ENCODE measurements at regions of chr12 and their contacts with region 1.

Region 1: DNA sequence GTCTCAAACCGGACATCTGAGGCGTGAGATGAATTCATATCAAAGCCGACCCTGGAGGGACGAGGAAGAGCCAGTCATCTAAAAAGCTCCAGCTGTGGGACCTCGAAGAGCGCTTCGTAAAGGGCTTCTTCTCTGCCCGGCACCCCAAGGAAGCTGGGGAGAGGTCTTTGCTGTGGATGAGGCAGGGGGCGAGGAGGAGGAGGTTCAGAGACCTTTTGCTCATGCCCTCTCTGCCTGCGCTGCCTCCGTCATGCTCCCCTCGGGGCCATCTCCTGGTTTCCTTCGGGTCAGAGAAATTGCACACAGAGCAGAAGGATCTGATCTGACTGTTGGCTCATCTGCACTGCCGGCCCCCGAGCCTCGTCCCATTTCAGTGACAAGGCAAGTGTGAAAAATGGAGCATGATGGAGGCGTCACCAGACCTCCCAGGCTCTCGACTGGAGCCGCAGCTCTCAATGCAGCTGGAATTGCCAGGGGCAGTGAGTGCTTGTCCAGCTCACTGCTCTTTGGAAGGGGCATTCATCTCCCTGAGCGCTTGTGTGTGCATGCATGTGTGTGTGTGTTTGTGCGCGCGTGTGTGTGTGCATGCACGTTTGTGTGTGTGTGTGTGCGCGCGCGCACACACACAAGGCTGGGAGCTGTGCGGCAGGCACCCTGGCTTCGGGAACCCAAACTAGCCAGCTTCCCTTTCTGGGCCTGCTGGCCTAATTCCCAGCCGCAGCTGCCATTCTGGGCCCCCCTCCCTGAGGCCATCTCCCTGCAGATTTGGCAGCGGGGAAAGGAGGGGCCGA is 9.2 kb downstream of the CABP1 start:
- DNase-seq: peak in 2 of 3 donors; percentile 50 to 62
- H3K4me3 ChIP-seq: peak overlapping the region in 4 of 7 experiments; percentile 26 to 66 (median 62)
- H3K27ac ChIP-seq: no peak overlapping the region
- H3K4me1 ChIP-seq: peaks cover 0 to 17% (median 15%) of the 10 kb centered on the region in 4 experiments
- H3K27me3 ChIP-seq: peaks cover 0 to 34% (median 30%) of the 10 kb centered on the region in 5 experiments

Region 2: DNA sequence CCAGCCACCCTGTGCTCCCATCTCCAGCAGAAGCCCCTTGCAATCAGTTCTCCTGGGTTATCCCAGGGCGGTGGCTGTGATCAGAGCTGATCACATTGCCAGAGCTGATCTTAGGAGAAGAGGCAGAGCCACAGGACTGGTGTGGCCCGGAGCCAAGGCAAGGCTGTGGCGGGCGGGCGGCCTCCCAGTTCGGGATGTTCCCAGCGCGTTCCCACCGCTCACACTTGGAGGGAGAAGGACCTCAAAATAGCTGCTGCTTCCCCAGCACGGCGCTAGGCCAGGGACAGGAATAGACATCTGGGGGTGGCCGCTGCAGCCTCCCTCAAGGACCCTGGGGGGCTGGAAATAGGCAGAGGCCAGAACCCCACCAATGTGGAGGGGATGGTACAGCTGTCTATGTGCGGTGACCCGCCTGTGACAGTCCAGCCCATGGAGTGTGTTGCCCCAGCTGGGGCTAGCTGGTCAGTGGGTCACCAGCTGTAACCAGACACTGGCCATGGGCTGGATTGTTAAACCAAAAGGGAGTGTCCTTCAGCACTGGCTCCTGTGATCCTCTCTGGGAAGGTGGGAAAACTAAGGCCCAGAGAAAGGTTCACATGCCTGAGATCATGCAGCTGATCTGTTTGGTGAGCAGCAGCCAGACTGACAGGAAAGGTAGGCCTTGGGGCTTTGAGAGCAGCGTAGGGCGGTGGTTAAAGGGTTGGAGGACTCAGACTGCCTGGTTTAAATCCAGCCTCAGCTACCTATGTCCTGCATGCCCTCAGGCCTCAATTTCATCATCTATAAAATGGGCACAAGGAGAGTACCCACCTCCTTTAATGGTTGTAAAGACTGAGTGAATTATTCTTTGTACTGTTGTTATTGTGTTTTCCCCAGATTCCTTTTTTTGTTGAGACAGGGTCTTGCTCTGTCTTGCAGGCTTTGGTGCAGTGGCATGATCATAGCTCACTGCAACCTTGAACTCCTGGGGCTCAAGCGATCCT is 60.4 kb before region 1 on chr12:
- CTCF ChIA-PET with region 1: interaction called, 58 read pairs
- POLR2A ChIA-PET with region 1: no interaction called
- DNase-seq: no peak
- H3K4me3 ChIP-seq: no peak overlapping the region
- H3K27ac ChIP-seq: no peak overlapping the region
- H3K4me1 ChIP-seq: peaks cover 0 to 8% (median 6%) of the 10 kb centered on the region in 4 experiments
- H3K27me3 ChIP-seq: peaks cover 0 to 22% (median 8%) of the 10 kb centered on the region in 5 experiments

Region 3: DNA sequence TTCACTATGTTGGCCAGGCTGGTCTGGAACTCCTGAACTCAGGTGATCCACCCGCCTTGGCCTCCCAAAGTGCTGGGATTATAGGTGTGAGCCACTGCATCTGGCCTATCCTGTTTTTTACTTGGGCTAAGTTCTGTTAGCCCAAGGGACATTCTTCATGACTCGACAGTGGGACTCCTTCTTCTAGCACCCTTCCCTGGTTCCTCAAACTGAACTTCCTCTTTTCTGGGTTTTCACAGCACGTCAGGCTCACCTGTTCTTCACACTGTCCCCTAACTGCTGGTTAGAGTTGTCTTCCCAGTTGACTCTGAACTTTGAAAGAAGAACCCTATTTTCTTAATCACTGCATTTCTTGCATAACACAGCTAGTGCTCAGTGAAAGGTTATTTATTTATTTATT is 13.2 kb after region 1 on chr12:
- CTCF ChIA-PET with region 1: interaction called, 47 read pairs
- POLR2A ChIA-PET with region 1: no interaction called
- DNase-seq: peak in 2 of 3 donors; percentile 62 to 72
- H3K4me3 ChIP-seq: no peak overlapping the region
- H3K27ac ChIP-seq: no peak overlapping the region
- H3K4me1 ChIP-seq: peaks cover 0 to 4% (median under 1%) of the 10 kb centered on the region in 4 experiments
- H3K27me3 ChIP-seq: no peaks in the 10 kb centered on the region

Region 4: DNA sequence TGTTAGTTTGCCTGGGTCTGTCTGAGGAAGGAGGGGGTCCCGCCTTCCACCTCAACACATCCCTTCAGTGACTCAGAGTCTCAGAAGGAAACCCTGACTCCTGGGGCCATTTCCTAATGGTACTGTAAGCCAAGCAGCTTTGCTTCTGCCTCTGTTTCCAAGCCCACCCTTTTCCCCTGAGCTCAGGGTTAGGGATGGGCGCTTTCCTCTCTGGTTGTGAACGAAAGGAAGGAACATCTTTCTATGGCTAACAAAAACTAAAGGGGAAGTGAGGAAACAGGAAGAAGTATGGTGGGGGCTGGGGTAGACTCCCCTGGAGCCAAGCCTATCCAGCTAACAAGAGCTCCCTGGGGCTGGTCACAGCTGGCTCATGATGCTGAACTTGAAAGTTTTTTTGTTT is 49.0 kb after region 1 on chr12:
- CTCF ChIA-PET with region 1: interaction called, 20 read pairs
- POLR2A ChIA-PET with region 1: no interaction called
- DNase-seq: peak in 2 of 3 donors; percentile 46 to 57
- H3K4me3 ChIP-seq: no peak overlapping the region
- H3K27ac ChIP-seq: peak overlapping the region in 1 of 2 experiments; percentile 46
- H3K4me1 ChIP-seq: peaks cover 0 to 13% (median 9%) of the 10 kb centered on the region in 4 experiments
- H3K27me3 ChIP-seq: no peaks in the 10 kb centered on the region

Region 5: GRCh38 chr12:120971299-120972179 is 321.9 kb after region 1 on chr12:
- CTCF ChIA-PET with region 1: interaction called, 43 read pairs
- POLR2A ChIA-PET with region 1: no interaction called
- DNase-seq: peak; percentile 81 to 91 (median 90)
- H3K4me3 ChIP-seq: peak overlapping the region in 2 of 7 experiments; percentile 25 to 31
- H3K27ac ChIP-seq: no peak overlapping the region
- H3K4me1 ChIP-seq: peaks cover 0 to 11% (median 2%) of the 10 kb centered on the region in 4 experiments
- H3K27me3 ChIP-seq: no peaks in the 10 kb centered on the region

Measured in common myeloid progenitor, CD34-positive (primary cell).